PC-3 (cell line): ENCODE measurements at regions of chr6 and their contacts with region 1.

Region 1: GRCh38 chr6:49541210-49541724 is 9.2 kb upstream of the C6orf141 start:
- DNase-seq: peak; percentile 94
- ATAC-seq: peak; percentile 83
- H3K4me3 ChIP-seq: peak overlapping the region; percentile 49
- H3K27ac ChIP-seq: peak overlapping the region; percentile 98
- H3K4me1 ChIP-seq: peaks cover 24% of the 10 kb centered on the region
- H3K27me3 ChIP-seq: no peaks in the 10 kb centered on the region
- CTCF ChIP-seq: no peak

Region 2: GRCh38 chr6:49506569-49507111 is 34.6 kb before region 1 on chr6:
- CTCF ChIA-PET with region 1: no interaction called
- POLR2A ChIA-PET with region 1: no interaction called
- intact Hi-C with region 1: no loop called
- DNase-seq: no peak
- ATAC-seq: no peak
- H3K4me3 ChIP-seq: no peak overlapping the region
- H3K27ac ChIP-seq: no peak overlapping the region
- H3K4me1 ChIP-seq: no peaks in the 10 kb centered on the region
- H3K27me3 ChIP-seq: no peaks in the 10 kb centered on the region
- CTCF ChIP-seq: no peak

Region 3: DNA sequence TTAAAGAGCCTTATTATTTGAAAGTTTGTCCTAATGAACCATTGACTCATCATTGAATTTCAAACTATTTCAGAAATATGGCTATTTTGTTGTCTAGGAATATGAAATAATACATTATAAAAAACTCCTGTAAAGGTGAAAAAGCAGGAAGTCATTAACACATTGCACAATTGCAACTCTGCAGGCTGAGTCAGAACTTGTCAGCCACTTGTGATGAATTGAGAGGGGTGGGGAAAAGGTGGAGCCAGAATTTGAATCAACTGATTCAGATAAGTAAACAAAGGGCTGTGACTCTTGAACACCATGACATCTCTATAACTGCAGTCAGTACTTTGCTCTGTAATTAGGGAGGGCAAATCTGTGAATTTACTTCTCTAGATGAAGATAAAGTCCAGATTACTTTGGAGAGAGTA is 15.2 kb after region 1 on chr6:
- CTCF ChIA-PET with region 1: interaction called, 6 read pairs
- POLR2A ChIA-PET with region 1: interaction called, 13 read pairs
- intact Hi-C with region 1: loop called (anchors 2 kb)
- DNase-seq: peak; percentile 91
- ATAC-seq: peak; percentile 82
- H3K4me3 ChIP-seq: peak overlapping the region; percentile 18; the same call in 1 of the 2 replicates
- H3K27ac ChIP-seq: peak overlapping the region; percentile 72
- H3K4me1 ChIP-seq: peaks cover 56% of the 10 kb centered on the region
- H3K27me3 ChIP-seq: no peaks in the 10 kb centered on the region
- CTCF ChIP-seq: no peak